ENCODE measurements at regions of chr20 and their contacts with region 1.

Region 1: DNA sequence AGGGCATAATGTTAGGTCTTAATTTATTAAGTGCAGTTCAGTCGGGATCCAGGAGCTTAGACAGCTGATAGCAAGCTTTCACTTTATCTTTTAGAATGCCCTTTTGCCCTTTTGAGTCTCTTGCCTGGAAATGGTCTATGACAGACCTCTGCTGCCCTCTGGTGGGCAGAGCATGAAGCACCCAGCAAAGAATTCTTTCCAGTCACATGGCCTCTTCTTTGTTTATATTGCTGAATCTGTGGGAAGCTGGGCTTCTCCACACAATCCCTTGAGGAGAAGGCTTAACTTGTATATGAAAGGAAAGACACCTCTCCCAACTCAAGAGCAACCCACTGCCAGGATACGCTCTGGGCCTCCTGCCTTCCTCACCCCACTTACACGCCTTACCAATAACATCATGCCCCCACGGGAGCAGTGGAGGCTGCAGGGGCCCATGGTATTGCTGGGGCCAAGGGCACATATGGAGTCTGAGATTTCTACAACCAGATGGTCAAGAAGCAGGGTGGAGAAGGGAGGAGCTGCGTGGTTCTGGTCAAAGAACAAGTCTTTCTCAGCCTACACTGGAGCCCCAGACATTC is 20.4 kb downstream of the WFDC3 start:
- DNase-seq: peak; percentile 86
- H3K4me3 Mint-ChIP-seq: no peak overlapping the region
- H3K27ac Mint-ChIP-seq: no peak overlapping the region
- H3K4me1 Mint-ChIP-seq: peaks cover 5% of the 10 kb centered on the region
- H3K27me3 Mint-ChIP-seq: peaks cover 3% of the 10 kb centered on the region

Region 2: GRCh38 chr20:45322952-45323383 is 448.3 kb before region 1 on chr20:
- CTCF ChIA-PET with region 1: interaction called, 17 read pairs
- POLR2A ChIA-PET with region 1: no interaction called
- intact Hi-C with region 1: loop called (anchors 5 kb)
- DNase-seq: no peak
- H3K4me3 Mint-ChIP-seq: no peak overlapping the region
- H3K27ac Mint-ChIP-seq: no peak overlapping the region
- H3K4me1 Mint-ChIP-seq: peaks cover 26% of the 10 kb centered on the region
- H3K27me3 Mint-ChIP-seq: no peaks in the 10 kb centered on the region

Region 3: GRCh38 chr20:45373353-45374100 is 397.7 kb before region 1 on chr20:
- CTCF ChIA-PET with region 1: interaction called, 24 read pairs
- POLR2A ChIA-PET with region 1: no interaction called
- intact Hi-C with region 1: no loop called
- DNase-seq: peak; percentile 94
- H3K4me3 Mint-ChIP-seq: peak overlapping the region; percentile 79
- H3K27ac Mint-ChIP-seq: peak overlapping the region; percentile 87
- H3K4me1 Mint-ChIP-seq: peaks cover 25% of the 10 kb centered on the region
- H3K27me3 Mint-ChIP-seq: no peaks in the 10 kb centered on the region

Region 4: DNA sequence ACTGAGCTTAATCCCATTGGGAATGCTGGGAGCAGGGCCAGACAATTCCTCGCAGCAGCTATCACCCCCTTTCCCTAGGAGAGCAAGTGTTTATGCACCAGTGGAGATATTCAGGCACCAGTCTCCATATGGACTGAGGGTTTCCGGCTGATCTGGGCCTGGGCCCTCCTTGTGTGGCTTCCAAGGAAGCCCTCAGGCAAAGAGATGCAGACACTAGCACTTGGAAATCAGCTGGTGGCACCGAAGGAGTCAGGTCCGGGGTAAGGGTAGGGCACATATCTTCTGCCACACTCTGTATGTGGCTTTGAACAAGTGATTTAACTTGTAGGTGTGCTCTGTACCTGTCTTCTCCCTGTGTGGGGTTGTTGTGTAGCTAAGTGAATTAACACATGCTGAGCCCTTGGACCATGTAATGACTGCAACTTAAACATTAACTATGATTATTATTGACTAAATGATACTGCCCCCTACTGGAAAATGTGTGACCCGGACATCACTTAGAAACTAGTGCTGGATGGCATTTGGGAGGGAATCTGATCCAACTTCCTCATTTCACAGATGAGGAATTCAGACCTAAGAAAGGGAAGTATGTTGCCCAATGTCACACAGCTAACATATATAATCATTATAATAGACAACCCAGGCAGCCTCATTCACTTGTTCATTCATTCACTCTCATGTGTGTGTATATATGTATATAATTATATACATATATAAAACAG is 321.0 kb before region 1 on chr20:
- CTCF ChIA-PET with region 1: interaction called, 50 read pairs
- POLR2A ChIA-PET with region 1: no interaction called
- intact Hi-C with region 1: no loop called
- DNase-seq: no peak
- H3K4me3 Mint-ChIP-seq: no peak overlapping the region
- H3K27ac Mint-ChIP-seq: no peak overlapping the region
- H3K4me1 Mint-ChIP-seq: no peaks in the 10 kb centered on the region
- H3K27me3 Mint-ChIP-seq: peaks cover 3% of the 10 kb centered on the region

Region 5: DNA sequence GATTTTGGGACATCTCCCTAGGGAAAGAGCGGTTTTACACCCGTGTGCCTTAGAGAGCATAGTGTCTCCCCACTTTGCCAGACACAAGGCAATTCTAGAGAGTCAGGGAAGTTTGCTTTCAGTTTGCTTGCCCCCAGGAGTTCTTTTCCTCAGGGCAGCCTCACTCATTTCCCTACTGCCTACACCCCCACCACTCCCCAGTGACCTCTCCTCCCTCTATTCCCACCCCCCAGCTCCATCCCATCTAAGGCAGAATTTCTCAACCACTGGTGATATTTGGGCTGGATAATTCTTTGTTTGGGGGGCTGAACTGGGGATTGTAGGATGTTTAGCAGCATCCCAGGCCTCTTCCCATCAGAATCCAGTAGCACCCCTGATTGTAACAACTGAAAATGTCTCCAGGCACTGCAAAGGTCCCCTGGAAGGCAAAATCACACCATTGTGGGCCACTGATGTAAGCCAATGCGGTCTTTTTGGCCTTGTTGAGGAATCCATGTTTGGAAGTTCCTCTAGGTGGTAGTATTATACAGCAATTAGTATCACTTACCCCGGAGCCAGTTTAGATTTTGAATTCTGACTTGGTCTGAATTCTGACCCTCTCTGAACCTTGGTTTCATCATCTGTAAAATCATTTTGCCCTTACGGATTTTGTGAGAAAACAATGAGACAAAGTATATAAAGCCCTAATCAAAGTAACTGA is 225.4 kb before region 1 on chr20:
- CTCF ChIA-PET with region 1: interaction called, 12 read pairs
- POLR2A ChIA-PET with region 1: no interaction called
- intact Hi-C with region 1: no loop called
- DNase-seq: no peak
- H3K4me3 Mint-ChIP-seq: no peak overlapping the region
- H3K27ac Mint-ChIP-seq: no peak overlapping the region
- H3K4me1 Mint-ChIP-seq: no peaks in the 10 kb centered on the region
- H3K27me3 Mint-ChIP-seq: peaks cover 29% of the 10 kb centered on the region

Region 6: DNA sequence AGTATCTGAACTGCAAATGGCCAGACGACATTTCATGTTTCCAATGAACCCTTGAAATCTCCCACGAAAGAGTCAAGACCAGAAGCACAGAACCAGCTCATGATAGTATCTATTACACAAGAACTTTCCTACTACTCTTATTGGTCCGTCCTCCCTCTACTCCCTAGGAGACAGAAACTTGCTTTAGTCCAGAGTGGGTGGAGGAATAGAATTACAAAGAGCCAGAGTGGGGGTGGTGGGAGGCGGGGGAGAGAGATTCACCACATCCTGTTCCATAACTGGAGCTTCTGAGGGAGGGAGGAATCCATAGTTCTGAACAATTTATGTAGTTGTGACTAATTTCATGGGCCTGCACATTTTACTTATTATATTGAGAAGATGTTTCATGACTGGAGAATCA is 160.2 kb before region 1 on chr20:
- CTCF ChIA-PET with region 1: interaction called, 16 read pairs
- POLR2A ChIA-PET with region 1: no interaction called
- intact Hi-C with region 1: no loop called
- DNase-seq: peak; percentile 82
- H3K4me3 Mint-ChIP-seq: no peak overlapping the region
- H3K27ac Mint-ChIP-seq: no peak overlapping the region
- H3K4me1 Mint-ChIP-seq: peaks cover 17% of the 10 kb centered on the region
- H3K27me3 Mint-ChIP-seq: peaks cover 28% of the 10 kb centered on the region

Region 7: DNA sequence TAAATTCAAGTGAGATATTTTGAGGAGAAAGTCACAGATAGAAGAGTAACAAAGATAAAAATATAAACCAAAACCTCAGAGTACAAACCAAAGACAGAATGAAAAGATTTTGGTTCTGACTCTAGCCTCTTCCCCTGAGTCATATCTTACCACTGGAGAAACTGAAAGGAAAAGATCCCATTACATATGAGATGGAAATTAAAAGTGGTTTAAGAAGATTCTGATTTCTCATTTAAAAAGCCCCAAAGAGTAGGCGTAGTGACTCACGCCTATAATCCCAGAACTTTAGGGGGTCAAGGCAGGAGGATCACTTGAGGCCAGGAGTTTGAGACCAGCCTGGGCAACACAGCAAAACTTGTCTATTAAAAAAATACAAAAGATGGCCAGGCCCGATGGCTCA is 18.5 kb before region 1 on chr20:
- CTCF ChIA-PET with region 1: interaction called, 12 read pairs
- POLR2A ChIA-PET with region 1: no interaction called
- intact Hi-C with region 1: no loop called
- DNase-seq: peak; percentile 39
- H3K4me3 Mint-ChIP-seq: no peak overlapping the region
- H3K27ac Mint-ChIP-seq: no peak overlapping the region
- H3K4me1 Mint-ChIP-seq: peaks cover 18% of the 10 kb centered on the region
- H3K27me3 Mint-ChIP-seq: peaks cover 26% of the 10 kb centered on the region

Region 8: DNA sequence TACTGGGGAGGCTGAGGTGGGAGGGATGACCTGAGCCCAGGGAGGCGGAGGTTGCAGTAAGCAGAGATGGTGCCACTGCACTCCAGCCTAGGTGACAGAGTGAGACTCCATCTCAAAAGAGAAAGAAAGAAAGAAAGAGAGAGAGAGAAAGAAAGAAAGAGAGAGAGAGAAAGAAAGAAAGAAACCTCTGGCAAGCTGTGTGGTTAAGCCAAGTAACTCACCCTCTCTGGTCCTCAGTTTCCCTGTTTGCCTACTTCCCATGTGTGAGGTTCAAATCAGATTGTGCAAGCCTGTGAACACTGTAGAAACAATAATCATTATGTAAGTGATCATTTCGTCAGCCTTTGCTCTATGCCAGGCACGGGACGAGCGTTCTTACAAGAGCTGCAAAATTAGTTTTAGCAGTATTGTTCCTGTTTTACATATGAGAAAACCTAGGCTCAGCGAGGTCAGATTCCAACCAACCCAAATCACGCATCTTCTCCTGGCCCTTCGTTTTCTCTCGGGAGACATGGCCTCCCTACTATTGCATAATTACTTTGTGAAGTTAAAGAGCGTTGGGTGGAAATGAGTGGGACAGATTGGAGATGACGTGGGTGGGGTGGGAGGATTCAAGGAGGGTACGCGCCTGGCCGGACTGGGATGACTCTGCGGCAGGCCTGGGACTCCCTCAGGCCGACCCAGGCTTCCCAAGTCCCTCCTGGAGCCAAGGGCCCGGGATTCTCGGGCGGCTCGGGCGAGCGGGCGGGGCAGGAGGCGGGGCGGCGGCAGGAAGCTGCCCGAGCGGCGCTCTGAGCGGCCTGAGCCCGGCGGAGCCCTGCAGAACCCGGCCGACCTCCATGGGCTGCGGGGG is 62.0 kb after region 1 on chr20 and contains the start of gene SNX21:
- CTCF ChIA-PET with region 1: no interaction called
- POLR2A ChIA-PET with region 1: no interaction called
- intact Hi-C with region 1: no loop called
- DNase-seq: peak; percentile 61
- H3K4me3 Mint-ChIP-seq: peak within 1 kb of the TSS; percentile 66
- H3K27ac Mint-ChIP-seq: no peak within 1 kb of the TSS
- H3K4me1 Mint-ChIP-seq: peaks cover 13% of the 10 kb centered on the region
- H3K27me3 Mint-ChIP-seq: no peaks in the 10 kb centered on the region
- total RNA-seq, gene SNX21: 1.8 to 2.2 TPM

Region 9: DNA sequence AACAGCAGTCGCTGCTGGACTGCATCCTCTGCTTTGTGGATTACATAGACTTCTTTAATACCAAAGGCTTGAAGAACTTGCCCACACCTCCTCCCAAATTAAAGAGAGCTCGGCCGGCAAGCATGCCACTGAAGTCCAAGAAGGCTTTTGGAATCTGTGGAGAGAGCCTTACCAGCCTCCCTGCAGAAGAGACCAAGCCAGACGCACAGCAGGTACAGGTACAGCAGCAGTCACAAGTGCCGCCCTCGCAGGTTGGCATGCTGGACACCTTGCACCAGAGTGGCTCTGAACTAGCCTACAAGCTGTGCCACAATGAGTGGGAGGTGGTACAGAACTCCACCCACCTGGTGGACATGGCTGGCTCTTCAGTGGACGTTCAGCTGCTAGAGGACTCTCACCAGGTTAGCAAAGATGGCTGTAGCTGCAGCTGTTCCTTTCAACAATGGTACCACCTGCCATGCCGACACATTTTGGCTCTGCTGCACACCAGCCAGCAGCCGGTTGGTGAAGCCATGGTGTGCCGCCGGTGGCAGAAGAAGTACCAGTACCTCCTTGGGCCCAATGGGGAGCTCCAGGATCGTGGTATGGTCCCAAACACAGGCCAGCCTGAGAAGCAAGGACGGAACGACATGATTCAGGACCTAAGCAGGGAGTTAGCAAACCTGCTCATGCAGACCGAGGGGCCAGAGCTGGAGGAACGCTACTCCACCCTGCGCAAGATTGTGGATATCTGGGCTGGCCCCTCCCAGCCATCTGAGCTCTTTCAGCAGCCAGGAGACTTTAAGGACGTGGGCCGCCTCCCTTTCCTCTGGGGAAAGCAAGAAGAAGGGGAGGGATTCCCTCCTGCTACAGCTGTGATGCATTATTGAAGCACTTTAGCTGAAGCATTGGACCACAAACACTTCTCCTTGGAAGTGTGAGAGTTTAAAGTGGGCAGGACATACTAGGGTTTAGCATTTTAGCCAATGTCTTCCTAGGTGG is 106.8 kb after region 1 on chr20:
- CTCF ChIA-PET with region 1: no interaction called
- POLR2A ChIA-PET with region 1: no interaction called
- intact Hi-C with region 1: no loop called
- DNase-seq: no peak
- H3K4me3 Mint-ChIP-seq: no peak overlapping the region
- H3K27ac Mint-ChIP-seq: no peak overlapping the region
- H3K4me1 Mint-ChIP-seq: peaks cover 20% of the 10 kb centered on the region
- H3K27me3 Mint-ChIP-seq: no peaks in the 10 kb centered on the region